Activated naive CD4-positive, alpha-beta T cell treated with anti-CD3 and anti-CD28 coated beads, Interleukin-2, amount 10 ng/mL, durations not matched to agents 7 days and 5 days (primary cell): ENCODE measurements at regions of chr18 and their contacts with region 1.

Region 1: GRCh38 chr18:3447895-3448837 is 1.8 kb upstream of the TGIF1 start:
- DNase-seq: peak; percentile 92
- H3K4me3 Mint-ChIP-seq: peak overlapping the region; percentile 94
- H3K27ac Mint-ChIP-seq: peak overlapping the region; percentile 100
- H3K4me1 Mint-ChIP-seq: peaks cover 37% of the 10 kb centered on the region
- H3K27me3 Mint-ChIP-seq: peaks cover 14% of the 10 kb centered on the region

Region 2: DNA sequence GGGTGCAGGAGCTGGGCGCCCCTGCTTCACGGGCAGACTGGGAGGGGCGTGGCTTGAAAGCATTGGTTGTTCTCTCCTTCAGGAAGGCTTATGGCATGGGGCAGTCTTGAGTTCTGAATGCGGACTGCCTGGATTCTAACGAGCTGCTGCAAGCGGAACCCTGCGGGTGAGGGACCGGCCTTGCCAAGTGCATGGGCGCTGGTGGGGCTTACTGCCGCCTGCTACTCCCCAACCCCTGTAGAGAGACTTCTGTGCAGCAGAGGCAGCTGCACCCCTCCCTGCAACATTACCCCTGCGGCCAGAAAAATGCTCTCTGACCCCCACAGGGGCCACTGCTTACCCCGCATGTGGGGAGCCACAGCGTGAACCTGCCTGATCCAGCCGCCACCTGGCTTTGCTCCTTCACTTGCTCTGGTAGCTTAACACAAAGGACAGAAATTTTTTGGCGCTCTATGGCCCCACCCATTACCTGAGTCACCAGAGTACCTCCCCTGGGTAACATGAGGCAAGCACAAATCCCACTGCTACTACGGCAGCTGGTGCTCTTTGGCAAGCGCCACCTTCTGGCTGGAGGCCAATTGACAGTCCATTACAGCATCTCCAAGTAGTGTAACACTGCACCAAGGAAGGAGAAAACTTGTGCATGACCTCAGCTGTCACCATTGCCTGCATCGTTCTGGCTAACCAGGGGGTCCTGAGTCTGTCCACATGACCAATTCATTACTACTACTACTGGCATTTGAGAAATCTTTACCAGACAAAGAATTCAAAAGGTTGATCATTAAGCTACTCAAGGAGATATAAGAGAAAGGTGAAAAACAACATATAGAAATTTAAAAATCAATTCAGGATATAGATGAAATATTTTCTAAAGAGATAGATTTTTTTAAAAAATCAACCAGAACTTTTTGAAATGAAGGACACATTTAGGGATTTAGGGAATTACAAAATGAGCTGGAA is 150.9 kb before region 1 on chr18:
- CTCF ChIA-PET with region 1: interaction called, 15 read pairs
- DNase-seq: peak; percentile 97
- H3K4me3 Mint-ChIP-seq: peak overlapping the region; percentile 93
- H3K27ac Mint-ChIP-seq: peak overlapping the region; percentile 81
- H3K4me1 Mint-ChIP-seq: peaks cover 11% of the 10 kb centered on the region
- H3K27me3 Mint-ChIP-seq: peaks cover 21% of the 10 kb centered on the region

Region 3: DNA sequence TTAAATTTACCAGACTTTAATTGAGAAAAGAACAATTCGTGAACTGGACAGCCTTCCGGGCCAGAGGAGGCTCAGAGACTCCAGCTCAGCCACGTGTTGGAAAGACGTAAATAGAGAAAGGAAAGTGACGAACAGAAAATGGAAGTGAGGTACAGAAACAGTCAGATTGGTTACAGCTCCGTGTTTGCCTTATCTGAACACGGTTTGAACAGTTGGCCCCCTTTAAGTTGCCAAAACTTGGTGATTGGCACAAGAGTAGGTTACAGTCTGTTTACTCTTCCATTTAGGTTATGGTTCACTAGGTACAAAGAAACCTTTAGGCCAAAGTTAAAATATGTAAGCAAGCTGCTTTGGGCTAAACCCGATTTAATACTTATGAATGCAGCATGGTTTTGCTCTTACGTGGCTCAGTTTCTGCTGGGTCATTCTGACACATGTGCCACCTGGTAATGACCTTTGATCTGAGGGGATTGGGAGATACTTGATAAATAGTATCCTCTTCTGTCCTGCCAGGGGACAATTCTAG is 63.4 kb before region 1 on chr18:
- CTCF ChIA-PET with region 1: no interaction called
- DNase-seq: no peak
- H3K4me3 Mint-ChIP-seq: no peak overlapping the region
- H3K27ac Mint-ChIP-seq: no peak overlapping the region
- H3K4me1 Mint-ChIP-seq: no peaks in the 10 kb centered on the region
- H3K27me3 Mint-ChIP-seq: no peaks in the 10 kb centered on the region

Region 4: GRCh38 chr18:3466045-3466444 is 17.9 kb after region 1 on chr18:
- CTCF ChIA-PET with region 1: interaction called, 19 read pairs
- DNase-seq: no peak
- H3K4me3 Mint-ChIP-seq: no peak overlapping the region
- H3K27ac Mint-ChIP-seq: no peak overlapping the region
- H3K4me1 Mint-ChIP-seq: peaks cover 14% of the 10 kb centered on the region
- H3K27me3 Mint-ChIP-seq: peaks cover 8% of the 10 kb centered on the region

Region 5: GRCh38 chr18:3560755-3561154 is 112.6 kb after region 1 on chr18:
- CTCF ChIA-PET with region 1: no interaction called
- DNase-seq: no peak
- H3K4me3 Mint-ChIP-seq: no peak overlapping the region
- H3K27ac Mint-ChIP-seq: no peak overlapping the region
- H3K4me1 Mint-ChIP-seq: no peaks in the 10 kb centered on the region
- H3K27me3 Mint-ChIP-seq: peaks cover 4% of the 10 kb centered on the region

Region 6: DNA sequence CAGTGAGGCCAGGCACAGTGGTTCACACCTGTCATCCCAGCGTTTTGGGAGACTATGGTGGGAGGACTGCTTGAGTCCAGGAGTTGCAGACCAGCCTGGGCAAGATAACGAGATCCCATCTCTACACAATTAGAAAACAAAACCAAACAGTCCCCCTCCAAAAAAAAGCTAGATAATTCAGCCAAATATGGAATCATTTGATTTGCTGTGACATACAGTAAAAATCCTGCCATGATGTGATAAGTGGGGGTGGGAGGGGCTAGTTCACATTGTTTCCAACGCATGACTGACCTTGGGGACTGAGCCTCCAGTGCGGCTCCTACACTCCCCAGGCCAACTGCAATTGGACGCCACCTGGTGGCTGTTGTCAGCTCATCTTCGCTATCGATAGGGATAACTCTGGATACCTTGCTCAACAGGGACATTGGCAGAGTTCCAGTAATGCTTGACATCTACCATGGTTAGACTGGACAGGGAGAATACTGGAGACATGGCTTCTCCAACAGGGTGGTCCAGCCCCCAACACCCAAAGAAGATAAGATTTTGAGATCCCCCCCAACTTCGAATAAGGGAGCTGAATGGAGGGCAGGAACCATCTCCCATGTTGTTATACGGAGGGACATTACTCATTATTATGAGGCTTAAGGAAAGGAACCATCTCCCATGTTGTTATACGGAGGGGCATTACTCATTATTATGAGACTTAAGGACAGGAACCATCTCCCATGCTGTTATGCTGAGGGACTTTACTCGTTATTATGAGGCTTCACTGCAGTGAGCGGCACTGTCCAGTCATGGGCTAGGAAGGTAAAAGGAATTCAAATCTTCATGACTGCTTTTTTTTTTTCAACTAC is 137.7 kb after region 1 on chr18:
- CTCF ChIA-PET with region 1: interaction called, 69 read pairs
- DNase-seq: peak; percentile 77
- H3K4me3 Mint-ChIP-seq: no peak overlapping the region
- H3K27ac Mint-ChIP-seq: no peak overlapping the region
- H3K4me1 Mint-ChIP-seq: peaks cover 35% of the 10 kb centered on the region
- H3K27me3 Mint-ChIP-seq: peaks cover 2% of the 10 kb centered on the region

Region 7: DNA sequence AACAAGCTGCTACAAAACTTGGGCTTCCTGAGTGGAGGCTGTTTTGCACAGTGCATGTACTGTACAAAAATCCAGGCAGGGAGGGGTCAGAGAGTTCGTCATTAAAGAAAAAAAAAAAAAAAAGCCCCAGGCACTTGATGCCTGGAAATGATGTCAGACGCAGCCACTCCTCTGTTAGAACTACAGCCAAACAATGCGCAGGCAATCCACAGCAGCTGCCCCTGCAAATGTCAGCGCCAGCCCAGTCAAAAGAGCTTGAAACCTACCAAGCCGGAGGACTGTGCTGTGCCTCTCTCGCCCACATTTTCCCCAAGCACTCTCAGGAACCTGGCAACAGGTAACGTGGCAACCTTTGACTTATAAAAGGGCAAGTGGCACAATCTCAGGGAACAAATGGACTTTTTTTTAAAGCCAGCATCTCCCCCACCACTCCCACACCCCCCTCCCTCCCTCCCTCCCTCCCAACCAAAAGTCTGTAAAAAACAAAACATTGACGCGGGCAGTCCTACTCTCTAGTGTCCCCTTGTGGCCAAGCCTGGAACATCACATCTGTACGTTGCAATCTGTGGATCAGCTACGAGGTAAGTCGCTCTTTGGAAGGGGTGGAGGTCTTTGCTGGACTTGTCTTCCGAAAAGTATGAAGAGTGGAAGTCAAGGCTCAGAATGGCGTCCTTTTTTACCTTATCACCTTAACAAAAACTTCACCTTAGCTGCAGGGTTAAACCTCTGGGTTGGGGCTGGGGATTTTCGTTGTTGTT is 145.9 kb after region 1 on chr18:
- CTCF ChIA-PET with region 1: interaction called, 69 read pairs
- DNase-seq: peak; percentile 92
- H3K4me3 Mint-ChIP-seq: peak overlapping the region; percentile 84
- H3K27ac Mint-ChIP-seq: peak overlapping the region; percentile 99
- H3K4me1 Mint-ChIP-seq: peaks cover 60% of the 10 kb centered on the region
- H3K27me3 Mint-ChIP-seq: no peaks in the 10 kb centered on the region